ENCODE measurements at regions of chr1 and their contacts with region 1.

Region 1: DNA sequence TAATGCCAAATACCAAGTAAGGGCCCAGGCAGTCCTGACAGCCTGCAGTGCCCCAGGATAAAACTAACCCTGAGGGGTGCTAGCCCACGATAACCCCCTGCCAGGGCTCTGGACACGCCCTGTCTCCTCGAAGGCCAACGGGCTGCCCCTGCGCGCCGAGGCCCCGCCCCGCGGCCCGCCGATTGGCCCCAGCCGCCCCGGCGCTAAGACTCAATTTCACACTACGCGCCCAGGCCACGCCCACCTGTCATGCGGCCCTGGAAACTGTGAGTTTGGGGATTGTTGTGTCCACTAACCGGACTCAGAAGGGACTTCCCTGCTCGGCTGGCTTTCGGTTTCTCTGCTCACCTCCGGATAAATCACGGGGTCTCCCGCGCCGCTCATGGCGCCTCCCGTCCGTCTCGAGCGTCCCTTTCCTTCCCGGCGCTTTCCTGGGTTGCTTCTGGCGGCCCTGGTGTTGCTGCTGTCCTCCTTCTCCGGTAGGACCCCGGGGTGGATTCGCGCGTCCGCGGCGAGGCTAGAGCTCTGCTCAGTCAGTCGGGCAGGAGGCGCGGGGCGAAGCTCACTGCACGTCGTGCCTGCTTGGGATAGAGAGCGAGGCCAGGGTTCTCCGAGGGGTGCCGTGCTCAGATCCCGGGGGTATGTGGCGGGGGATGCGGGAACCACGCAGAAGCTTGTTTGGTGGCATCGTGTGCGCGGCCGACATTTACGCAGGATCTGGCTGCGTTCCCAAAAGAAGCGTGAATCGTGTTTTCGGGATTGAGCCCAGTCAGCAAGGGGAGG is at the start of gene CR1L:
- DNase-seq: peak; percentile 88
- ATAC-seq: peak; percentile 100
- H3K4me3 Mint-ChIP-seq: peak within 1 kb of the TSS; percentile 64
- H3K27ac Mint-ChIP-seq: no peak within 1 kb of the TSS
- H3K4me1 Mint-ChIP-seq: peaks cover 8% of the 10 kb centered on the region
- H3K27me3 Mint-ChIP-seq: peaks cover 15% of the 10 kb centered on the region
- total RNA-seq, gene CR1L: not detected

Region 2: GRCh38 chr1:207628776-207629175 is 16.3 kb before region 1 on chr1:
- CTCF ChIA-PET with region 1: no interaction called
- POLR2A ChIA-PET with region 1: no interaction called
- intact Hi-C with region 1: no loop called
- DNase-seq: no peak
- ATAC-seq: no peak
- H3K4me3 Mint-ChIP-seq: no peak overlapping the region
- H3K27ac Mint-ChIP-seq: no peak overlapping the region
- H3K4me1 Mint-ChIP-seq: no peaks in the 10 kb centered on the region
- H3K27me3 Mint-ChIP-seq: peaks cover 3% of the 10 kb centered on the region

Region 3: DNA sequence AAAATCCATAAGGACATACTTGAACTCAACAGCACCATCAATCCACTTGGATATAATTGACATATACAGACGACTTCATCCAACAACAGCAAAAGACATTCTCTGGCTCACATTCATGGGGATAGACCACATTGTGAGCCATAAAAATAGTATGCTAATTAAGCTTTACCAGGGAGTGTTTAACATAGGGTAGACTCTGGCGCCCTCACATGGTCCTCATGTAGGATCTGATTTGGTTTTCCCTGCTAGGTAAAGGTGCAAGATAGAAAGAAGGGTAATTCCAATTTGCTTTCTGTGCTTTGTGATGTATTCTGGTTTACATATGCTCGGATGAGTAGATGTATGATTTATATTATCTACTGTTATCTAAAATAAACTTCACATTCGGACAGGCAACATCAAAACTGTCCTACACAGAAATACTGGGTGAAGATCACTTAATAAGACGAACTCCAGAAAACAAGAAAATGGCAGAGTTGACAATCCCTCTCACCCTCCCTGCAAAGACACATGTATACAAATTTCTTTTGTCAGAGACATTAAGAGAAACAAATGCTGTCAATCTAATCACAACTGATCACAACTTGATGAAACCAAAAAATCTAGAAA is 27.6 kb after region 1 on chr1:
- CTCF ChIA-PET with region 1: interaction called, 7 read pairs
- POLR2A ChIA-PET with region 1: interaction called, 11 read pairs
- intact Hi-C with region 1: no loop called
- DNase-seq: peak; percentile 61
- ATAC-seq: peak; percentile 61
- H3K4me3 Mint-ChIP-seq: no peak overlapping the region
- H3K27ac Mint-ChIP-seq: no peak overlapping the region
- H3K4me1 Mint-ChIP-seq: peaks cover 5% of the 10 kb centered on the region
- H3K27me3 Mint-ChIP-seq: peaks cover 44% of the 10 kb centered on the region

Region 4: GRCh38 chr1:208085655-208086515 is 440.8 kb after region 1 on chr1:
- CTCF ChIA-PET with region 1: no interaction called
- POLR2A ChIA-PET with region 1: no interaction called
- intact Hi-C with region 1: loop called in 1 of 2 experiments (anchors 5 kb)
- DNase-seq: no peak
- ATAC-seq: peak; percentile 14
- H3K4me3 Mint-ChIP-seq: peak overlapping the region; percentile 67
- H3K27ac Mint-ChIP-seq: peak overlapping the region; percentile 90
- H3K4me1 Mint-ChIP-seq: peaks cover 25% of the 10 kb centered on the region
- H3K27me3 Mint-ChIP-seq: no peaks in the 10 kb centered on the region